Activated T-helper 2 cell treated with anti-CD3 and anti-CD28 coated beads, Interferon-gamma antibody, Interleukin-2, Interleukin-4, amounts not matched to agents 10 μg/mL and 5 μg/mL and 100 μg/mL, durations not matched to agents 14 hours and 24 hours and 36 hours (primary cell): ENCODE measurements at regions of chr15 and their contacts with region 1.

Region 1: DNA sequence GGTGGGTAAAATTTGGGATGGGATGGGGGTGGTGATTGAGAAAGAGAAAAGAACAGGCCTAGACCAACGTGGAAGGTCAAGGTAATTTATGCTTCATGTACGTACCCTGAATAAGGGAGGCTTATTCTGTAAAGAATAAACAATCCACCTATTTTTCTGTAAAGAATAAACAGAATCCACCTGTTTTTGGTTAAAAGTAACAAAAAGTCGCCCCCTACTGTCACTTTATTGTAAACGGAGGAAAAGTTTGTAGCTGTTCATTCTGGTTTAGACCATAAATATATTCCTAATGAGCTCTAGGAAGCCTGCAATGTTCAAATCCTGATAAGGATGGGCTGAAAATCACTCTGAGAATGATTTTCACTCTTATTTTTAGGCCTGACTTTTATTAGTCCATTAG is 23.5 kb upstream of the SQOR start:
- DNase-seq: no peak
- H3K4me3 Mint-ChIP-seq: no peak overlapping the region
- H3K27ac Mint-ChIP-seq: no peak overlapping the region
- H3K4me1 Mint-ChIP-seq: peaks cover 7% of the 10 kb centered on the region
- H3K27me3 Mint-ChIP-seq: no peaks in the 10 kb centered on the region

Region 2: DNA sequence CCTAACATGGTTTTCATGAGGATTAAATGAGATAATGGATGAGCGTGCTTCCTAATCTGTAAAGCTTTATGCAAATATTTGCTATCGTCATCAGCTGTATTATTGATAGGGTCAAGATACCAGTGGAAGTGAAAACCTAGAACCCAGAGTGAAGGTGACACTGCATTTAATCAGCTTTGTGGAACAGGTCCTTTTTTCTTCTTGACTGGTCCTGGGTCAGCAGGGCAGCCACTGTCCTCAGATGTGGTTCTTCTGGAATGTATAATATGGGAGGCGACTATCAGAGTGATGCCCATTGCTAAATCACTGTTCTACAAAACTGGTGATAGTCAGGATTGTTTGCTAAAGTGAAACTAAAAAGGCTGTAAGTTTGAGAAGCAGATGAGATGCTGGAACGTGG is 546.9 kb before region 1 on chr15:
- intact Hi-C with region 1: no loop called
- DNase-seq: no peak
- H3K4me3 Mint-ChIP-seq: no peak overlapping the region
- H3K27ac Mint-ChIP-seq: no peak overlapping the region
- H3K4me1 Mint-ChIP-seq: peaks cover 14% of the 10 kb centered on the region
- H3K27me3 Mint-ChIP-seq: no peaks in the 10 kb centered on the region

Region 3: DNA sequence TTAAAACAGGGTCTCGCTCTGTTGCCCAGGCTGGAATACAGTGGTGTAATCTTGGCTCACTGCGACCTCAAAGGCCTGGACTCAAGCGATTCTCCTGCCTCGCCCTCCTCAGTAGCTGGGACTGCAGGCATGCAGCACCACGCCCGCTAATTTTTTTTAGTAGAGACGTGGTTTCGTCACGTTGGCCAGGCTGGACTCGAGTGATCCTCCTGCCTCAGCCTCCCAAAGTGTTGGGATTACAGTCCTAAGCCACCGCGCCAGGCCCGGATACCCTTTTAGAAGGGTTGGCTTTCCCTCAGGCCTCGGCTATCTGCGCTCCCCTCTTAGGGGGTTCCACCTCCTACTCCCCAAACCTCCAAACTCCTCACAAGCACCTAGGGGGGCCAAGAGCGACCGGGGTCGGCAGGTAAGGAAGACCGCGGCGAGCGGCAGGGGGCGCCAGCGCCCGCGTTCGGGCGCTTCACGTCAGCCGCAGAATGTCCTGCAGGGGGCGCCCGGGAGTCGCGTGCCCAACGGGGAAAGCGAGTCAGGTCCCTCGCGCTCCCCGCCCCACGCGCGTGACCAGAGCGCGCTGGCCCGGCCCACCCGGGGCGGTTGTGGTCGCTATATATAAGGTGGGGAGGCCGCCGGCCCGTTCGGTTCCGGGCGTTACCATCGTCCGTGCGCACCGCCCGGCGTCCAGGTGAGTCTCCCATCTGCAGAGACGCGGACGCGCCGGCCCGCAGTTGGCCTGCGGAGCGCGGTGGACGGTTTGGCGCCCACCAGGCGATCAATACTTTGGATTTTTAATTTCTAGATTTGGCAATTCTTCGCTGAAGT is 181.1 kb before region 1 on chr15:
- intact Hi-C with region 1: loop called (anchors 2 kb)
- DNase-seq: peak; percentile 80
- H3K4me3 Mint-ChIP-seq: peak overlapping the region; percentile 39
- H3K27ac Mint-ChIP-seq: no peak overlapping the region
- H3K4me1 Mint-ChIP-seq: peaks cover 2% of the 10 kb centered on the region
- H3K27me3 Mint-ChIP-seq: peaks cover 32% of the 10 kb centered on the region

Region 4: GRCh38 chr15:45522328-45523160 is 88.8 kb before region 1 on chr15 and contains the start of gene SLC30A4:
- intact Hi-C with region 1: loop called (anchors 5 kb)
- DNase-seq: peak; percentile 53
- H3K4me3 Mint-ChIP-seq: peak within 1 kb of the TSS; percentile 89
- H3K27ac Mint-ChIP-seq: peak within 1 kb of the TSS; percentile 45
- H3K4me1 Mint-ChIP-seq: peaks cover 19% of the 10 kb centered on the region
- H3K27me3 Mint-ChIP-seq: peaks cover 31% of the 10 kb centered on the region
- total RNA-seq, gene SLC30A4: 0.74 and 1.0 TPM in 2 replicates

Region 5: GRCh38 chr15:45587095-45587860 is 24.0 kb before region 1 on chr15 and contains the start of gene BLOC1S6:
- intact Hi-C with region 1: loop called (anchors 2 kb)
- DNase-seq: peak; percentile 86
- H3K4me3 Mint-ChIP-seq: peak within 1 kb of the TSS; percentile 98
- H3K27ac Mint-ChIP-seq: peak within 1 kb of the TSS; percentile 100
- H3K4me1 Mint-ChIP-seq: peaks cover 26% of the 10 kb centered on the region
- H3K27me3 Mint-ChIP-seq: peaks cover 3% of the 10 kb centered on the region
- total RNA-seq, gene BLOC1S6: 49.7 and 50.2 TPM in 2 replicates

Region 6: GRCh38 chr15:45634442-45635190 is 23.3 kb after region 1 on chr15 and contains the start of gene SQOR:
- intact Hi-C with region 1: no loop called
- DNase-seq: peak; percentile 68
- H3K4me3 Mint-ChIP-seq: peak within 1 kb of the TSS; percentile 98
- H3K27ac Mint-ChIP-seq: peak within 1 kb of the TSS; percentile 89
- H3K4me1 Mint-ChIP-seq: peaks cover 40% of the 10 kb centered on the region
- H3K27me3 Mint-ChIP-seq: peaks cover 7% of the 10 kb centered on the region
- total RNA-seq, gene SQOR: 111 and 115 TPM in 2 replicates